Ovary (tissue), 10 donors: ENCODE measurements at regions of chr15 and their contacts with region 1.

Region 1: GRCh38 chr15:95247099-95247984 is 1016.0 kb downstream of the MCTP2 start:
- DNase-seq: no peak
- H3K4me3 ChIP-seq: no peak overlapping the region
- H3K27ac ChIP-seq: no peak overlapping the region
- H3K4me1 ChIP-seq: no peaks in the 10 kb centered on the region
- H3K27me3 ChIP-seq: no peaks in the 10 kb centered on the region
- CTCF ChIP-seq: no peak
- EP300 ChIP-seq: no peak
- POLR2A ChIP-seq: no peak

Region 2: GRCh38 chr15:94230956-94231722 is 1016.2 kb before region 1 on chr15 and contains the start of gene MCTP2:
- intact Hi-C with region 1: no loop called
- DNase-seq: peak; percentile 26 to 63 (median 54)
- H3K4me3 ChIP-seq: peak within 1 kb of the TSS; percentile 55
- H3K27ac ChIP-seq: no peak within 1 kb of the TSS
- H3K4me1 ChIP-seq: no peaks in the 10 kb centered on the region
- H3K27me3 ChIP-seq: no peaks in the 10 kb centered on the region
- CTCF ChIP-seq: no peak
- EP300 ChIP-seq: no peak
- POLR2A ChIP-seq: no peak
- total RNA-seq, gene MCTP2: 0.71 to 44.5 (median 6.0) TPM

Region 3: GRCh38 chr15:95068701-95069521 is 178.4 kb before region 1 on chr15:
- intact Hi-C with region 1: no loop called
- DNase-seq: no peak
- H3K4me3 ChIP-seq: no peak overlapping the region
- H3K27ac ChIP-seq: no peak overlapping the region
- H3K4me1 ChIP-seq: no peaks in the 10 kb centered on the region
- H3K27me3 ChIP-seq: no peaks in the 10 kb centered on the region
- CTCF ChIP-seq: no peak
- EP300 ChIP-seq: no peak
- POLR2A ChIP-seq: no peak

Region 4: GRCh38 chr15:95129574-95129973 is 117.8 kb before region 1 on chr15:
- intact Hi-C with region 1: no loop called
- DNase-seq: peak in 4 of 5 donors; percentile 22 to 44 (median 31)
- H3K4me3 ChIP-seq: no peak overlapping the region
- H3K27ac ChIP-seq: no peak overlapping the region
- H3K4me1 ChIP-seq: no peaks in the 10 kb centered on the region
- H3K27me3 ChIP-seq: no peaks in the 10 kb centered on the region
- CTCF ChIP-seq: no peak
- EP300 ChIP-seq: no peak
- POLR2A ChIP-seq: no peak

Region 5: DNA sequence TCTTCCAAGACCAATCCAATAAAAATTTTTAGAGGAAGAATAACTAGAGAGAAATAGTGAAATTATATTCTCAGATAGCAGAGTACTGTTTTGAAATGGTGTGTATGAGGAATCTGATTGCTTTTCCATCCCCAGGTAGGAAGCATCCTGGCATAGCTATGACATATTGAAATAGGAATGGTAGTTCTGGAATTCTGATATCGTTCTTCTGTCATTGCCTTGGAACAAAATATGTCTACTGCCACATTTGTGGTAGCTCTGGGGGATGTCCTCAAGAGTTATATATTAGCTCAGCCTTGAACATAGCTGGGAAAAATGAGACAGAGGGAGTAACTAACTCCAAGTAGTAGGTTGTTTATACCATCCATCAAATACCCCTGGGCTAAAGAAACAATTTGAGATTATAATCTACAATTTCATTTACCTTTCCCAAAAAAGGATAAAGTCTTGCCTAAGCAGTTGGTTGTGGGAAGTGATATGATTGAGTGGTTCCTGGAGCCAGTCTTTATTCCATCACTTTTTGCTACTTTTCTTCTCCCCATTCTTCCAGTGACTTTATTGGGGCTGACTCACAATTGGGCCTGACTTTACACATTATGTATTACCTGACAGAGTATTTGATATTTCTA is 65.1 kb before region 1 on chr15:
- intact Hi-C with region 1: loop called in 1 of 4 experiments (anchors 5 kb)
- DNase-seq: no peak
- H3K4me3 ChIP-seq: no peak overlapping the region
- H3K27ac ChIP-seq: no peak overlapping the region
- H3K4me1 ChIP-seq: no peaks in the 10 kb centered on the region
- H3K27me3 ChIP-seq: no peaks in the 10 kb centered on the region
- CTCF ChIP-seq: no peak
- EP300 ChIP-seq: no peak
- POLR2A ChIP-seq: no peak

Region 6: GRCh38 chr15:95459273-95459672 is 211.9 kb after region 1 on chr15:
- intact Hi-C with region 1: no loop called
- DNase-seq: peak in 1 of 5 donors; percentile 28
- H3K4me3 ChIP-seq: no peak overlapping the region
- H3K27ac ChIP-seq: peak overlapping the region; percentile 42 to 59
- H3K4me1 ChIP-seq: peaks cover 12% of the 10 kb centered on the region
- H3K27me3 ChIP-seq: no peaks in the 10 kb centered on the region
- CTCF ChIP-seq: no peak
- EP300 ChIP-seq: no peak
- POLR2A ChIP-seq: no peak